Transverse colon (tissue), 4 donors: ENCODE measurements at regions of chr3 and their contacts with region 1.

Region 1: DNA sequence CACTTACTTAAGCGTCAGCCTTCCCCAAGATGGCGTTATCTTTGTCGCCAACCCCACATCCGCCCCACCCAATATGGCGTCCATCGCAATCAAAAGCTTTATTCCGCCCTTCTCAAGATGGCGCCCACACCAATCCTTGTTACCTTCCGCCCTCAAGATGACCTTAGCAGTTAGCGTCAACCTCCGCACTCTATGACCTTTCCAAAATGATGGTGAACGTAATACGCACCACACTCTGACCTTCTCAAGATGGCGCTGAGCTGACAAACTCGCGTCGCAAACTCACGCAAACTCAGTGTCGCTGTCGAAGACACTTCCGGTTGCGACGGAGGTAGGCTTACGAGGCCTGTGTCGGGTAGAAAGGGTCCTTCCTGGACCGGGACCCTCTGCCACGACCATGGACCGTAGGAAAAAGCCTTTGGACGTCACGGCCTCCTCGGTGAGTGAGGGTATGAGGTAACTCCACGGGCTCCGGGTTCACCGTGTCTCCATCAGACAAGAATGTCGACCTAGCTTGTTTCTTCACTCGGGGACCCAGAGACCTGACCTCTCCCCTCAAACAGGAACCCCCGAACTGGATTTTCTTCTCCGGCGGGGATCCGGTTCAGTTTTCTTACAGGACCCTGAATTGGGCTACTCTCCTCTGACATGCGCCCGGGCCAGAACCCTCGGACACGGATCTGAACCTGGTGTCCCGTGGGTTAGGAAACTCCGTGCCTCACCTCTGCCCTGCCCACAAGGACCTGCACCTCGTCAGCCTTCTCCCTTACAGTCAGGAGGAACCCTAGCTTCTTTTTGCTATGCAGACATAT is at the start of gene CCDC174:
- DNase-seq: peak; percentile 97
- H3K4me3 ChIP-seq: peak within 1 kb of the TSS; percentile 58 to 79 (median 62)
- H3K27ac ChIP-seq: peak within 1 kb of the TSS; percentile 88 to 94 (median 90)
- H3K4me1 ChIP-seq: peaks cover 12 to 34% (median 29%) of the 10 kb centered on the region in 4 donors
- H3K27me3 ChIP-seq: no peaks in the 10 kb centered on the region
- CTCF ChIP-seq: no peak
- EP300 ChIP-seq: no peak
- POLR2A ChIP-seq: peak; percentile 91
- total RNA-seq, gene CCDC174: 29.2 to 84.8 (median 35.9) TPM

Region 2: GRCh38 chr3:14178247-14179113 is 473.2 kb before region 1 on chr3 and contains the starts of genes LSM3 and XPC:
- in situ Hi-C with region 1: loop called in 1 of 4 experiments (anchors 25 kb)
- intact Hi-C with region 1: no loop called
- DNase-seq: peak; percentile 98
- H3K4me3 ChIP-seq: peak within 1 kb of the TSS; percentile 80 to 97 (median 89)
- H3K27ac ChIP-seq: peak within 1 kb of the TSS; percentile 96 to 99 (median 98)
- H3K4me1 ChIP-seq: peaks cover 11 to 39% (median 24%) of the 10 kb centered on the region in 4 donors
- H3K27me3 ChIP-seq: no peaks in the 10 kb centered on the region
- CTCF ChIP-seq: peak in 2 of 5 experiments; percentile 16 to 26
- EP300 ChIP-seq: no peak
- POLR2A ChIP-seq: peak; percentile 98
- total RNA-seq, gene LSM3: 5.6 to 9.6 (median 8.0) TPM
- total RNA-seq, gene XPC: 30.7 to 287 (median 46.6) TPM

Region 3: GRCh38 chr3:14371573-14372474 is 279.8 kb before region 1 on chr3:
- in situ Hi-C with region 1: no loop called
- intact Hi-C with region 1: no loop called
- DNase-seq: peak; percentile 91
- H3K4me3 ChIP-seq: no peak overlapping the region
- H3K27ac ChIP-seq: peak overlapping the region in 2 of 4 donors; percentile 3 to 45
- H3K4me1 ChIP-seq: peaks cover 0 to 28% (median 19%) of the 10 kb centered on the region in 4 donors
- H3K27me3 ChIP-seq: no peaks in the 10 kb centered on the region
- CTCF ChIP-seq: peak in 1 of 5 experiments; percentile 25
- EP300 ChIP-seq: no peak
- POLR2A ChIP-seq: no peak

Region 4: GRCh38 chr3:15042936-15043335 is 391.3 kb after region 1 on chr3:
- in situ Hi-C with region 1: loop called in 1 of 4 experiments (anchors 25 kb)
- intact Hi-C with region 1: no loop called
- DNase-seq: no peak
- H3K4me3 ChIP-seq: no peak overlapping the region
- H3K27ac ChIP-seq: no peak overlapping the region
- H3K4me1 ChIP-seq: no peaks in the 10 kb centered on the region
- H3K27me3 ChIP-seq: no peaks in the 10 kb centered on the region
- CTCF ChIP-seq: no peak
- EP300 ChIP-seq: no peak
- POLR2A ChIP-seq: no peak

Region 5: DNA sequence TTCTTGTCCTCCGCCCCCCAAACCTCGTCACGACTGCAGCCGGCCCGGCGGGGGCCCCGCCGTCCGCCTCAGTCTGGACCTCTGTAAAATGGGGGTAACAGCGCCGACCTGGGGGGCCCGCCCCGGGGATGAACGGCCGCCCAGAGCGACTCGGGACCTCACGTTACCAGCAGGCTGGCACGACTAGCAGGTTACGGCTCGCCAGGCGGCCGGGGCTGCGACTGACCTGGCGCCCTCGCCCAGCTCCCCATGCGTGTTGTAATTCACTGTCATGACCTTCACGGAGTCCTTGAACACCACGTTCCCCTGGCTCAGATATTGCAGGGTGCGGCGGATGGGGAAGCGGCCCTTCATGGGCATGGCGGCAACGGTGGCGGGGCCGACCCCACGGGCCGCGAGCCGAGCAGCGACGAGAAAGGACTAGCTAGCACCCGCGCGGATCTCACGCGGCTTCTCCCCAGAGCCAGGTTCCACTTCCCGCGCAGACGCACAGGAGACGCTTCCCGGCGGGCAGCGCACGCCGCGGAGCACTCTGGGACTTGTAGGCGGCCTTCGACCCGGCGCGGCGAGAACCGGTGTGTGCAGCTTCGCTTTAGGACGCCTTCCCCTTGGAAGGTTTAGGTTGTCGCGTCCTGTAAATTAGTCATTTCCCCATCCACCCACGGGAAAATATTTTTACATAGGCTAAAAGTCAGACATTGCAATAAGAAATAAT is 413.3 kb after region 1 on chr3 and contains the start of gene MRPS25:
- in situ Hi-C with region 1: loop called in 2 of 4 experiments (anchors 25 kb)
- intact Hi-C with region 1: no loop called
- DNase-seq: peak; percentile 92
- H3K4me3 ChIP-seq: peak within 1 kb of the TSS; percentile 67 to 89 (median 82)
- H3K27ac ChIP-seq: peak within 1 kb of the TSS; percentile 83 to 86 (median 86)
- H3K4me1 ChIP-seq: peaks cover 12 to 17% (median 14%) of the 10 kb centered on the region in 4 donors
- H3K27me3 ChIP-seq: no peaks in the 10 kb centered on the region
- CTCF ChIP-seq: no peak
- EP300 ChIP-seq: no peak
- POLR2A ChIP-seq: peak; percentile 91
- total RNA-seq, gene MRPS25: 47.5 to 209 (median 117) TPM